CD14-positive monocyte (primary cell): ENCODE measurements at regions of chr17 and their contacts with region 1.

Region 1: GRCh38 chr17:16005636-16006035 is 6.0 kb downstream of the TTC19 start:
- DNase-seq: no peak
- H3K4me3 ChIP-seq: no peak overlapping the region
- H3K4me3 Mint-ChIP-seq: no peak overlapping the region
- H3K27ac ChIP-seq: peak overlapping the region in 1 of 2 donors; percentile 4
- H3K27ac Mint-ChIP-seq: peak overlapping the region in 1 of 7 donors; percentile 17
- H3K4me1 ChIP-seq: peaks cover 9 to 13% of the 10 kb centered on the region in 2 donors
- H3K4me1 Mint-ChIP-seq: peaks cover 14% of the 10 kb centered on the region
- H3K27me3 ChIP-seq: no peaks in the 10 kb centered on the region
- H3K27me3 Mint-ChIP-seq: peaks cover 0 to under 1% (median 0%) of the 10 kb centered on the region in 3 donors
- CTCF ChIP-seq: no peak

Region 2: DNA sequence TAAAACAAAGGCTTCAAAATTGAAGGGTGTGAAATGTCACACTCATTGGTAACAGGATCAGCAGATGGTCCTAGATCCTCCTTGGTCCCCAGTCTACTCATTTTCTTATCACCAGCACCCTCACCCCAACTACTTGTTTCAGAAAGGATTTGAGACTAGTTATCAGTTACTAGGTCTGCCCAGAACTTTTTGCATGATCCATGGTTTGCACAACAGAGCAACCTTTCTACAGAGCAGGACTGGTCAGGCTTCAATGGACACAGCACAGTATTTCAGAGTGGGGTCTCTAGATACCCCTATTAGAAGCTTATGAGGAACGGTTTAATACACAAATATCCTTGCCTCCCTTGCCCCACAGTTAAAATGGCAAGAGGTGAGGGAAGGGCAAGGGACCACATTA is 19.6 kb after region 1 on chr17:
- intact Hi-C with region 1: loop called in 1 of 2 experiments (anchors 1 kb)
- DNase-seq: no peak
- H3K4me3 ChIP-seq: no peak overlapping the region
- H3K4me3 Mint-ChIP-seq: no peak overlapping the region
- H3K27ac ChIP-seq: no peak overlapping the region
- H3K27ac Mint-ChIP-seq: peak overlapping the region in 1 of 7 donors; percentile 28
- H3K4me1 ChIP-seq: no peaks in the 10 kb centered on the region
- H3K4me1 Mint-ChIP-seq: peaks cover 5% of the 10 kb centered on the region
- H3K27me3 ChIP-seq: no peaks in the 10 kb centered on the region
- H3K27me3 Mint-ChIP-seq: no peaks in the 10 kb centered on the region
- CTCF ChIP-seq: no peak

Region 3: GRCh38 chr17:16052486-16052885 is 46.9 kb after region 1 on chr17:
- intact Hi-C with region 1: no loop called
- DNase-seq: no peak
- H3K4me3 ChIP-seq: no peak overlapping the region
- H3K4me3 Mint-ChIP-seq: no peak overlapping the region
- H3K27ac ChIP-seq: no peak overlapping the region
- H3K27ac Mint-ChIP-seq: no peak overlapping the region
- H3K4me1 ChIP-seq: no peaks in the 10 kb centered on the region
- H3K4me1 Mint-ChIP-seq: no peaks in the 10 kb centered on the region
- H3K27me3 ChIP-seq: no peaks in the 10 kb centered on the region
- H3K27me3 Mint-ChIP-seq: no peaks in the 10 kb centered on the region
- CTCF ChIP-seq: no peak